Activated B cell treated with CpG ODN at 0.5 μM for 24 hours (primary cell): ENCODE measurements at regions of chr5 and their contacts with region 1.

Region 1: GRCh38 chr5:91089758-91090157 is 293.4 kb downstream of the ARRDC3 start:
- DNase-seq: no peak
- ATAC-seq: no peak
- H3K4me3 Mint-ChIP-seq: no peak overlapping the region
- H3K27ac Mint-ChIP-seq: no peak overlapping the region
- H3K4me1 Mint-ChIP-seq: no peaks in the 10 kb centered on the region
- H3K27me3 Mint-ChIP-seq: no peaks in the 10 kb centered on the region
- CTCF ChIP-seq: no peak

Region 2: GRCh38 chr5:90932052-90932699 is 157.6 kb before region 1 on chr5:
- CTCF ChIA-PET with region 1: no interaction called
- POLR2A ChIA-PET with region 1: no interaction called
- intact Hi-C with region 1: loop called (anchors 10 kb)
- DNase-seq: no peak
- ATAC-seq: no peak
- H3K4me3 Mint-ChIP-seq: no peak overlapping the region
- H3K27ac Mint-ChIP-seq: no peak overlapping the region
- H3K4me1 Mint-ChIP-seq: no peaks in the 10 kb centered on the region
- H3K27me3 Mint-ChIP-seq: no peaks in the 10 kb centered on the region
- CTCF ChIP-seq: no peak

Region 3: DNA sequence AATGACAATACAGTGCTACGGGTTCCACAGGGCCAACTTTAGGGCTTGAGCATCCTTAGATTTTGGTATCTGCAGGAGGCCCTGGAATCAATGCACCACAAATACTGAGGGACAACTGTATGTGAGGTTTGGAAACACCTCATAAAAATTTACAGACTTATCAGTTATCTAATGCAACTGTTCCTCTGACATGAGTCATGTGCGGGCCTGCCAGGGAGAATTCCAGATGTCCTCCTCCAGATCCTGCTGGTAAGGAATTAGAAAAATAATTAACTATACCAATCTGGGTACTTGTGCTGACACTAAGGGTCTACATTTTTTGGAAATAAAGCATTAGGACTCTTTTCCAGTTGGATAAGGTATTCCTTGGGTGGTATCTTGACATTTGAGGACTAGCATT is 40.0 kb before region 1 on chr5:
- CTCF ChIA-PET with region 1: no interaction called
- POLR2A ChIA-PET with region 1: no interaction called
- intact Hi-C with region 1: no loop called
- DNase-seq: no peak
- ATAC-seq: no peak
- H3K4me3 Mint-ChIP-seq: no peak overlapping the region
- H3K27ac Mint-ChIP-seq: no peak overlapping the region
- H3K4me1 Mint-ChIP-seq: no peaks in the 10 kb centered on the region
- H3K27me3 Mint-ChIP-seq: peaks cover 7% of the 10 kb centered on the region
- CTCF ChIP-seq: no peak